ENCODE measurements at regions of chr6 and their contacts with region 1.

Region 1: DNA sequence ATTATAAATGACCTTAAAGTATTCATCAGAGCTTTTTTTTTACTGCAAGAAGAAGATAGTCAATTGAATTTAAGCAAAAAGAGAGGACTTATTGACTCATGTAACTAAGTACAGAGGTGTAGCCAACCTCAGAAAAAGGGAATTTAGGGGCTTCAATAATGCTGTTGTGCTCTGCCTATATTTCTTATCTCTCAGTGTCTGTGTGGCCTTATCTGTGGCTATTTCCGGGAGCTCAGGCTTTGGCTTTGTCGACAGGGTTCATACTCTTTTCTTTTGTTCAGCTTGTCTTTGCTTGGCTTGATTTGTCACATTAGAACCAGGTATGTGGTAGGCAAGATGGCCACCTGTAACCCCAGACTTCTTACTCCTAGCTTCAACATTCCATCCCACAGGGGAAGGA is 38.6 kb upstream of the FABP7 start:
- DNase-seq: no peak
- ATAC-seq: no peak
- H3K4me3 ChIP-seq: no peak overlapping the region
- H3K27ac ChIP-seq: no peak overlapping the region
- H3K4me1 ChIP-seq: no peaks in the 10 kb centered on the region
- H3K27me3 ChIP-seq: no peaks in the 10 kb centered on the region
- CTCF ChIP-seq: no peak
- POLR2A ChIP-seq: no peak

Region 2: GRCh38 chr6:122568797-122569661 is 171.9 kb before region 1 on chr6:
- intact Hi-C with region 1: no loop called
- DNase-seq: no peak
- ATAC-seq: no peak
- H3K4me3 ChIP-seq: no peak overlapping the region
- H3K27ac ChIP-seq: no peak overlapping the region
- H3K4me1 ChIP-seq: no peaks in the 10 kb centered on the region
- H3K27me3 ChIP-seq: no peaks in the 10 kb centered on the region
- CTCF ChIP-seq: no peak
- POLR2A ChIP-seq: no peak

Region 3: GRCh38 chr6:122653094-122653493 is 87.8 kb before region 1 on chr6:
- intact Hi-C with region 1: no loop called
- DNase-seq: no peak
- ATAC-seq: peak in 1 of 4 donors; percentile 69
- H3K4me3 ChIP-seq: no peak overlapping the region
- H3K27ac ChIP-seq: no peak overlapping the region
- H3K4me1 ChIP-seq: no peaks in the 10 kb centered on the region
- H3K27me3 ChIP-seq: no peaks in the 10 kb centered on the region
- CTCF ChIP-seq: no peak
- POLR2A ChIP-seq: no peak

Region 4: DNA sequence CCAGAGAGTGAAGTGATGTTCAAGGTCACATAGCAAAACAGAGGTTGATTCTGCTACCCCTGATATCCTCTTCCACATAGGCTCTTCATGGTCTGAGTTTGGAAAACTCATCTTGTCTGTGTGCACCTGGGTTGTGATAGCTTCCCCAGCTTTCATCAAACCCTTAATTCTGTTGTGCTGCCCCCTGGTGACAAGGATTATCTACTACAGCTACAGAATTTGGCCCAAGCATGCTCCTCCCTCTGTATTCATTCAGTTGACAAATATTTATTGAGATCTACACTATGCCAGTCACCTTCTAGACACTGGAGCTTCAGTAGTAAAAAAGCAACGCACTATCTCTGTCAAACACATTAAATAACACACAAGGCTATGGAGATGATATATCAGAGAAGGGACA is 98.5 kb after region 1 on chr6:
- intact Hi-C with region 1: loop called in 1 of 2 experiments (anchors 5 kb)
- DNase-seq: peak in 1 of 3 donors; percentile 68
- ATAC-seq: peak; percentile 99 to 100 (median 100)
- H3K4me3 ChIP-seq: no peak overlapping the region
- H3K27ac ChIP-seq: no peak overlapping the region
- H3K4me1 ChIP-seq: no peaks in the 10 kb centered on the region
- H3K27me3 ChIP-seq: no peaks in the 10 kb centered on the region
- CTCF ChIP-seq: peak; percentile 54 to 89 (median 60)
- POLR2A ChIP-seq: no peak